ENCODE measurements at regions of chr18 and their contacts with region 1.

Region 1: DNA sequence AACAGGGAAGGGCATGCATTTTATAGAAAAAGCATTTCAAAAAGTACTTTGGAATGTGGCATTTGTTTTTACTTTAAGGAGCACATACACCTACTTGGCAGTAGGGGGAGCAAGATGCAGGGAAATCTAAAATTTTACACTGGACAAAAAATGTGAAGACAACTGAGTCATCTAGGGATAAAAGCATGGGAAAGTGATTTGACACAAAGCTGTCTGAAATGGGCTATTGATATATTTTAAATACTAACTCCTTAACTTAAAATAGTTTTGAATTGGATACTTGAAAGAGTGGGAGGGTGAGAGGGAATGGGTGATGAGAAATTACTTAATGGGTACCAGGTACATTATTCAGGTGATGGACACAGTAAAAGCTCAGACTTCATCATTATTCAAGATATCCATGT is 15.8 kb downstream of the TMEM200C start:
- DNase-seq: no peak
- ATAC-seq: no peak
- H3K4me3 ChIP-seq: no peak overlapping the region
- H3K27ac ChIP-seq: no peak overlapping the region
- H3K4me1 ChIP-seq: no peaks in the 10 kb centered on the region
- H3K27me3 ChIP-seq: no peaks in the 10 kb centered on the region
- CTCF ChIP-seq: peak in 2 of 3 experiments; percentile 49 to 55; a peak in 4 of 6 replicates
- POLR2A ChIP-seq: no peak
- RAD21 ChIP-seq: no peak

Region 2: DNA sequence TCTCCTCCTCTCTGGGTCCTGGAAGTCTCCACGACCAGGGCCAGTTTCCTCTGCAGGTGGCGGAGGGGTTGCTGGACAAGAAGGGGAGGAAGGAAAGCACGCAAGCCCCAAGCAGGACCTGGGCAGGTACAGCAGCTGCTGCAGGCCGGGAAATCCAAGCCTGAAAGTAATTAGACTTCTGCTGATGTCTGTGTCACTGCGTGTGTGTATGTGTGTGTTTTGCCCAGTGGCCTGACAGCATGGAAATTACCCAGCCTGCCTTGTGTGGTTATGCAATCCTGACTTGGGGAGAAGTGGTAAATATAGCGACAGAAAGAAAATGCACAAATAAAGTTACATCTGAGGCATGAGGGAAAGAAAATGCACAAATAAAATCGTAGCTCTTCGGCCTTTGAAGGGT is 462.1 kb before region 1 on chr18:
- CTCF ChIA-PET with region 1: no interaction called
- POLR2A ChIA-PET with region 1: no interaction called
- RAD21 ChIA-PET with region 1: no interaction called
- intact Hi-C with region 1: loop called (anchors 10 kb)
- DNase-seq: no peak
- ATAC-seq: no peak
- H3K4me3 ChIP-seq: no peak overlapping the region
- H3K27ac ChIP-seq: no peak overlapping the region
- H3K4me1 ChIP-seq: no peaks in the 10 kb centered on the region
- H3K27me3 ChIP-seq: no peaks in the 10 kb centered on the region
- CTCF ChIP-seq: no peak
- POLR2A ChIP-seq: no peak
- RAD21 ChIP-seq: no peak

Region 3: GRCh38 chr18:5817816-5818215 is 61.7 kb before region 1 on chr18:
- CTCF ChIA-PET with region 1: no interaction called
- POLR2A ChIA-PET with region 1: no interaction called
- RAD21 ChIA-PET with region 1: no interaction called
- intact Hi-C with region 1: no loop called
- DNase-seq: no peak
- ATAC-seq: no peak
- H3K4me3 ChIP-seq: no peak overlapping the region
- H3K27ac ChIP-seq: no peak overlapping the region
- H3K4me1 ChIP-seq: no peaks in the 10 kb centered on the region
- H3K27me3 ChIP-seq: no peaks in the 10 kb centered on the region
- CTCF ChIP-seq: no peak
- POLR2A ChIP-seq: no peak
- RAD21 ChIP-seq: no peak

Region 4: DNA sequence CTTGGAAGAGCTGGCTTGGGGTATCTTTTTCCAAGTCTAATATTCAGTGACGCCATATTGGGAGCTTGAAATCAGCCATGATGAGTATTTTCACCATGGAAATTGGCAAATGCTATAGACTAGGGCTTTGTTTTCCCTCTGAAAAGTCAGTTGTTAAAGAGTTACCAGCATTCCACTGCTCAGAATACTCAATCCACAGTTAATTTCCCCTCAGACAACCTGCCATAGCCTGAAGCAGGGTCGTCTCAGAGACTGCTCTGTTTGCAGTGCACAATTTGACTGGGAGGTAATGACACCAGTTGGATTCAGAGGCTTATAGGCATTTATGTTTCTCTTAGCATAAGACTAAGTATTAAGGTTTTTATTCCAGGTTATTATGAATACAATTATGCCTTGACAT is 51.3 kb after region 1 on chr18:
- CTCF ChIA-PET with region 1: no interaction called
- POLR2A ChIA-PET with region 1: no interaction called
- RAD21 ChIA-PET with region 1: no interaction called
- intact Hi-C with region 1: no loop called
- DNase-seq: no peak
- ATAC-seq: no peak
- H3K4me3 ChIP-seq: no peak overlapping the region
- H3K27ac ChIP-seq: no peak overlapping the region
- H3K4me1 ChIP-seq: no peaks in the 10 kb centered on the region
- H3K27me3 ChIP-seq: no peaks in the 10 kb centered on the region
- CTCF ChIP-seq: no peak
- POLR2A ChIP-seq: no peak
- RAD21 ChIP-seq: no peak

Region 5: DNA sequence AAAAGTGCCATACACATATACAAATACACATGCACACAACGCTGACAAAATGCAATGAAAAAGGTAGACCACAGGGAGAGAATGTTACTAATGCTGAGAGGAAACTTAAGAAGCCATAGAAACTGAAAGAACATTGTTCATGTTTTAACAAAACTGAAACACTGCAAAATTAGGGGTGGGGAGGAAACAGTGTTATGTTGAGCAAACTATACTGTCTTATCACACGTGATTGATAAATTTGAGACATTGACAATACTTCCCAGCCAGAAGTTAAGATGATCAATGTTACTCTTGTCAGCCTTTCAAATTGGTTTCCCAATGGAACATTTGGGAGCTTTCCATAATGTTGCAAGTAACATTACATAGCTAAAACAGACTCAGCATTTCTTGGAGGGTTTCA is 369.7 kb after region 1 on chr18:
- CTCF ChIA-PET with region 1: no interaction called
- POLR2A ChIA-PET with region 1: no interaction called
- RAD21 ChIA-PET with region 1: no interaction called
- intact Hi-C with region 1: no loop called
- DNase-seq: no peak
- ATAC-seq: no peak
- H3K4me3 ChIP-seq: no peak overlapping the region
- H3K27ac ChIP-seq: no peak overlapping the region
- H3K4me1 ChIP-seq: no peaks in the 10 kb centered on the region
- H3K27me3 ChIP-seq: no peaks in the 10 kb centered on the region
- CTCF ChIP-seq: no peak
- POLR2A ChIP-seq: no peak
- RAD21 ChIP-seq: no peak

Region 6: DNA sequence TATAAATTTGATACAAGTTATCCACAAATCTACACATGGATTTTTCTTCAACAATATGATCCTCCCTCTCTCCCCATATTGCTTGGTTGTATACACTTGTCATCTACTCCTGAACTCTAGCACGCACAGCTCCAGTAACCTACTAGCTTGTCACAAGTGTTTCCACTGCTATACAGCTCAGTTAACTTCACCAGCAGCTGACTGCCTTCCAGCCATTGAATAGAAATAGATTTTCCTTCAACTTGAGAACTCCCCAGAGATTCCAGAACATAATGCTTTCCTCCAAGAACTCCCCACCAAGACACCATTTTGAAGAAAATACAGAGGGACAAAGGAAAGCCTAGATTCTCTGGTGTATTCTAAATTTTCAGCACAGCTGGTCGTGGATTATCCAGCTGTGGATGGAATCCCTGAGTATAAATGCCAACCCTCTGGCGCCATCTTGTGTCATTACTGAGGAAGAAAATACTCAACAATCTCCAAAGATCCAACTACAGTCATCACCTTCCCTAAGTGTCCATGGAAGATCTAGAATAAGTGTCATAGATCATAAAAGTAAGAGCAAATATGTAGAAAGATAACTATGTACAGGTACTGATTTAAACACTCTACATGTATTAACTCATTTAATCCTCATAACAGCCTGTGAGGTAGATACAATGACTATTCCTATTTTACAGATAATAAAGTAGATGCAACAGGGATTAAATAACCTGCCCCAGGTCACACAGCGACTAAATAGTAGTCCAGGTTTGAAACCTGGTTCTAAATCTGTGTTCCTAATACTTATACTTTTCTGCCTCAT is 1006.7 kb after region 1 on chr18:
- CTCF ChIA-PET with region 1: no interaction called
- POLR2A ChIA-PET with region 1: no interaction called
- RAD21 ChIA-PET with region 1: no interaction called
- intact Hi-C with region 1: loop called (anchors 10 kb)
- DNase-seq: no peak
- ATAC-seq: no peak
- H3K4me3 ChIP-seq: no peak overlapping the region
- H3K27ac ChIP-seq: no peak overlapping the region
- H3K4me1 ChIP-seq: no peaks in the 10 kb centered on the region
- H3K27me3 ChIP-seq: no peaks in the 10 kb centered on the region
- CTCF ChIP-seq: peak in 2 of 3 experiments; percentile 31 to 49; a peak in 2 of 6 replicates
- POLR2A ChIP-seq: no peak
- RAD21 ChIP-seq: peak; percentile 32; the same call in 1 of the 2 replicates